ENCODE measurements at regions of chr19 and their contacts with region 1.

Region 1: GRCh38 chr19:19385108-19385899 is 20.2 kb upstream of the GATAD2A start:
- DNase-seq: peak; percentile 99 to 100 (median 99)
- H3K4me3 ChIP-seq: peak overlapping the region; percentile 52 to 57
- H3K4me3 Mint-ChIP-seq: peak overlapping the region; percentile 87 to 97 (median 94)
- H3K27ac ChIP-seq: peak overlapping the region; percentile 85
- H3K27ac Mint-ChIP-seq: peak overlapping the region; percentile 90 to 97 (median 94)
- H3K4me1 ChIP-seq: peaks cover 48% of the 10 kb centered on the region
- H3K4me1 Mint-ChIP-seq: peaks cover 25 to 47% (median 35%) of the 10 kb centered on the region in 4 donors
- H3K27me3 ChIP-seq: no peaks in the 10 kb centered on the region
- H3K27me3 Mint-ChIP-seq: no peaks in the 10 kb centered on the region

Region 2: DNA sequence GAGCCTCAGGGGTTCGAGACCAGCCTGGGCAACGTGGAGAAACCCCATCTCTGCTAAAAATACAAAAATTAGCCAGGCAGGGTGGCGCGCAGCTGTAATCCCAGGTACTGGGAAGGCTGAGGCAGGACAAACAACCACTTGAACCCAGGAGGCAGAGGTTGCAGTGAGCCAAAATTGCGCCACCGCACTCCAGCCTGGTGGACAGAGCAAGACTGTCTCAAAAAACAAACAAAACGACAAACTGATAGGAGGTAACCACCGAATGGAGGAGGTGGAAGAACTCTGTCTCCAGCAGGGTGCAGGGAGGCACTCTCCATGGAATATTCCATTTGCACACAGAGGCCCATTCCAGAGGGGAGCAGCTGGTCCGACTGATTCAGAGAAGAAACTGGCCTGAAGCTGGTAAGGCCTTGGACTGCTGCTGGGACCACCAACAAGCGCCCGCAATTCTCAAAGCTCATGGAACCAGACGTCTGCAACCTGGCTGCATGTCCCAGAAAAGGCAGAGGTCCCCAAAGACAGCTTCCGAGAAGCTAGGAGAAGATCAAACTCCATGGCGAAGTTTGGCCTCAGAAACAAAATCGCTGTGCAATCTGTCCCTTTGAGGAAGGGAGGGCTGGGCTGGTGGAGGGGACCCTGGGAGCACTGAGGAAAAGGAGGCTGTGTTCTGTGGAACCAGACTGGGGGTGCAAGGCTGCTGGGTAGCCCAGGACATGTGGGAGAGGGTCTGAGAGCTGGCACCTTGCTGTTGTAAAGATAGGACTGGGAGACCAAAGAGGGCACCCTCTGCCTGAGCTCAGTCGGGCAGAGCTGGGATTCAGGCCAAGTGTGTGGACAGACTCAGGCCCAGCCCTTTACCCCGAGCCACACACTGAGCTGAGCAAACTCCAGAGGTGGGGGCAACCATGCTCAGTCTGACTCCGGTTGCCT is 286.3 kb before region 1 on chr19:
- CTCF ChIA-PET with region 1: no interaction called
- POLR2A ChIA-PET with region 1: no interaction called
- intact Hi-C with region 1: no loop called
- DNase-seq: no peak
- H3K4me3 ChIP-seq: no peak overlapping the region
- H3K4me3 Mint-ChIP-seq: no peak overlapping the region
- H3K27ac ChIP-seq: no peak overlapping the region
- H3K27ac Mint-ChIP-seq: no peak overlapping the region
- H3K4me1 ChIP-seq: no peaks in the 10 kb centered on the region
- H3K4me1 Mint-ChIP-seq: peaks cover 0 to 3% (median 0%) of the 10 kb centered on the region in 4 donors
- H3K27me3 ChIP-seq: no peaks in the 10 kb centered on the region
- H3K27me3 Mint-ChIP-seq: no peaks in the 10 kb centered on the region

Region 3: DNA sequence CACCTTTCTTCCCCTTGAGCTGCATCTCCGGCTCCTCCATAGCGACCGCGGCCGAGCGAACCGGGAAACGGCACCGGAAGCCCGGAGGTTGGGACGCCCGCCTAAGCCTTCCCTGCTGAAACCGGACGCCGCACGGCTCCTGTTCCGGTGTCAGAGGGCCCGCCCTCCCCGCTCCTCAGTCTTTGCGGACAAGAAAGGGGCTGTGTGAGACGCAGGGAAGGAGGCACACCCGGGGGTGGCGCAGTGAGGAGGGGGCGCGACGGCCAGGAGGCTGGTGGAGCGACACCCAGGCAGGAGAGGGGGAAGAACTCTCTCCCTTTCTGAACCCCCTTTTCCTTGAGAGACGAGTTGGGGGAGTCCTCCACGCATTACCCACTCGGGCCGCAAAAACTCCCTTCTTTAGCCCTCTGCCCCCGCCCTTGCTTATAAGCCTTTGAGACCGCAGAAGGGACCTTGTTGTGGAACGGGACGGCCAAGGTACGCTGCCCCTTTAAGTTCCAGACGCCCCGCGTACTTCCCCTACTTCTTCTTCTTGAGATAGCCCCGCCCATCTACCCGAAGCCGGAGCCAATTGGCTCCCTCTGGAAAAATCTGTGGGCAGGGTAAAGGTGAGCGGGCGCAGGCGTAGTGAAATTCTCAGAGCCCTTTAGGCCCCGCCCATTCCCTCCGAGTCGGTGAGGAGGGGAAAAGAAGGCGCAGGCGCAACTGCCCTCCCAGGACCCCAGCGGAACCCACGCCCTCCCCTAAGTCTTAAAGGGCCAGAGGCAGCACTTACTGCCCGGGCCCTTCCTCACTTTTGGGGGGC is 193.0 kb before region 1 on chr19 and contains the starts of genes BORCS8 and RFXANK:
- CTCF ChIA-PET with region 1: no interaction called
- POLR2A ChIA-PET with region 1: no interaction called
- intact Hi-C with region 1: loop called (anchors 1 kb)
- DNase-seq: peak; percentile 97 to 99 (median 99)
- H3K4me3 ChIP-seq: peak within 1 kb of the TSS; percentile 98 to 100
- H3K4me3 Mint-ChIP-seq: peak within 1 kb of the TSS; percentile 95 to 99 (median 98)
- H3K27ac ChIP-seq: peak within 1 kb of the TSS; percentile 100
- H3K27ac Mint-ChIP-seq: peak within 1 kb of the TSS; percentile 98 to 100 (median 99)
- H3K4me1 ChIP-seq: peaks cover 44% of the 10 kb centered on the region
- H3K4me1 Mint-ChIP-seq: peaks cover 18 to 55% (median 37%) of the 10 kb centered on the region in 4 donors
- H3K27me3 ChIP-seq: no peaks in the 10 kb centered on the region
- H3K27me3 Mint-ChIP-seq: no peaks in the 10 kb centered on the region
- total RNA-seq, gene BORCS8: 36.0 to 41.2 TPM
- total RNA-seq, gene RFXANK: 69.5 to 77.2 TPM

Region 4: DNA sequence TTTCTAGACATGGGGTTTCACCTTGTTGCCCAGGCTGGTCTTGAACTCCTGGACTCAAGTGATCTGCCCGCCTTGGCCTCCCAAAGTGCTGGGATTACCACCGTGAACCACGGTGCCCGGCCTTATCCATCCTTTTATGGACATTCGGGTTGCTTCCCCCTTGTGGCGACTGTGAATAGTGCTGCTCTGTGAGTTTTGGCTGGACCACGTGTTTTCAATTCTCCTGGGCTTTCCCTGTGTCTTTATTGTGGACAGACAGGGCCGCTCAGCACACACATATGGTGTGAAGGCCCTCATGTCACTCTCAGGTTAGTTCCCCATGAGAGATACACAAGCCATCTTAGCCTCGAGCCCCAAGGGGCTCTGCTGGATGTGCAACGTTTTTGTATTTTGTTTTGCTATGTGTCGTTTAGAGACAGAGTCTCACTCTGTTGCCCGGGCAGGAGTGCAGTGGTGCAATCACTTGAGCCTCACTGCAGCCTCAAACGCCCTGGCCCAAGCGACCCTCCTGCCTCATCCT is 24.2 kb before region 1 on chr19:
- CTCF ChIA-PET with region 1: interaction called, 6 read pairs
- POLR2A ChIA-PET with region 1: interaction called, 20 read pairs
- intact Hi-C with region 1: loop called (anchors 2 kb)
- DNase-seq: peak; percentile 57 to 77 (median 65)
- H3K4me3 ChIP-seq: peak overlapping the region in 1 of 2 donors; percentile 24
- H3K4me3 Mint-ChIP-seq: peak overlapping the region in 6 of 8 donors; percentile 34 to 66 (median 52)
- H3K27ac ChIP-seq: no peak overlapping the region
- H3K27ac Mint-ChIP-seq: peak overlapping the region; percentile 25 to 88 (median 82)
- H3K4me1 ChIP-seq: peaks cover 35% of the 10 kb centered on the region
- H3K4me1 Mint-ChIP-seq: peaks cover 24 to 47% (median 35%) of the 10 kb centered on the region in 4 donors
- H3K27me3 ChIP-seq: no peaks in the 10 kb centered on the region
- H3K27me3 Mint-ChIP-seq: no peaks in the 10 kb centered on the region

Region 5: GRCh38 chr19:19372656-19373416 is 12.5 kb before region 1 on chr19:
- CTCF ChIA-PET with region 1: interaction called, 12 read pairs
- POLR2A ChIA-PET with region 1: interaction called, 20 read pairs
- intact Hi-C with region 1: loop called (anchors 1 kb)
- DNase-seq: peak; percentile 40 to 58 (median 52)
- H3K4me3 ChIP-seq: no peak overlapping the region
- H3K4me3 Mint-ChIP-seq: peak overlapping the region in 7 of 8 donors; percentile 50 to 73 (median 54)
- H3K27ac ChIP-seq: peak overlapping the region; percentile 63
- H3K27ac Mint-ChIP-seq: peak overlapping the region; percentile 79 to 95 (median 92)
- H3K4me1 ChIP-seq: peaks cover 18% of the 10 kb centered on the region
- H3K4me1 Mint-ChIP-seq: peaks cover 6 to 14% (median 9%) of the 10 kb centered on the region in 4 donors
- H3K27me3 ChIP-seq: no peaks in the 10 kb centered on the region
- H3K27me3 Mint-ChIP-seq: no peaks in the 10 kb centered on the region

Region 6: GRCh38 chr19:19399733-19400433 is 14.6 kb after region 1 on chr19:
- CTCF ChIA-PET with region 1: interaction called, 3 read pairs
- POLR2A ChIA-PET with region 1: interaction called, 49 read pairs
- intact Hi-C with region 1: loop called (anchors 1 kb)
- DNase-seq: no peak
- H3K4me3 ChIP-seq: no peak overlapping the region
- H3K4me3 Mint-ChIP-seq: no peak overlapping the region
- H3K27ac ChIP-seq: no peak overlapping the region
- H3K27ac Mint-ChIP-seq: peak overlapping the region in 4 of 7 donors; percentile 32 to 66 (median 47)
- H3K4me1 ChIP-seq: peaks cover 33% of the 10 kb centered on the region
- H3K4me1 Mint-ChIP-seq: peaks cover 16 to 56% (median 30%) of the 10 kb centered on the region in 4 donors
- H3K27me3 ChIP-seq: no peaks in the 10 kb centered on the region
- H3K27me3 Mint-ChIP-seq: no peaks in the 10 kb centered on the region

Region 7: GRCh38 chr19:19459707-19460251 is 74.5 kb after region 1 on chr19:
- CTCF ChIA-PET with region 1: no interaction called
- POLR2A ChIA-PET with region 1: interaction called, 20 read pairs
- intact Hi-C with region 1: no loop called
- DNase-seq: peak; percentile 63 to 89 (median 67)
- H3K4me3 ChIP-seq: peak overlapping the region; percentile 54 to 87
- H3K4me3 Mint-ChIP-seq: peak overlapping the region; percentile 86 to 95 (median 90)
- H3K27ac ChIP-seq: peak overlapping the region; percentile 79
- H3K27ac Mint-ChIP-seq: peak overlapping the region; percentile 96 to 100 (median 99)
- H3K4me1 ChIP-seq: peaks cover 88% of the 10 kb centered on the region
- H3K4me1 Mint-ChIP-seq: peaks cover 55 to 91% (median 75%) of the 10 kb centered on the region in 4 donors
- H3K27me3 ChIP-seq: no peaks in the 10 kb centered on the region
- H3K27me3 Mint-ChIP-seq: no peaks in the 10 kb centered on the region

Region 8: GRCh38 chr19:19515764-19516519 is 130.6 kb after region 1 on chr19 and contains the start of gene NDUFA13:
- CTCF ChIA-PET with region 1: interaction called, 3 read pairs
- POLR2A ChIA-PET with region 1: interaction called, 11 read pairs
- intact Hi-C with region 1: no loop called
- DNase-seq: peak; percentile 91 to 95 (median 92)
- H3K4me3 ChIP-seq: peak within 1 kb of the TSS; percentile 88 to 90
- H3K4me3 Mint-ChIP-seq: peak within 1 kb of the TSS; percentile 93 to 99 (median 97)
- H3K27ac ChIP-seq: peak within 1 kb of the TSS; percentile 92
- H3K27ac Mint-ChIP-seq: peak within 1 kb of the TSS; percentile 94 to 98 (median 97)
- H3K4me1 ChIP-seq: peaks cover 35% of the 10 kb centered on the region
- H3K4me1 Mint-ChIP-seq: peaks cover 16 to 47% (median 29%) of the 10 kb centered on the region in 4 donors
- H3K27me3 ChIP-seq: no peaks in the 10 kb centered on the region
- H3K27me3 Mint-ChIP-seq: no peaks in the 10 kb centered on the region
- total RNA-seq, gene NDUFA13: 191 to 199 TPM

Measured in CD4-positive, alpha-beta memory T cell (primary cell).